ENCODE measurements at regions of chr18 and their contacts with region 1.

Region 1: DNA sequence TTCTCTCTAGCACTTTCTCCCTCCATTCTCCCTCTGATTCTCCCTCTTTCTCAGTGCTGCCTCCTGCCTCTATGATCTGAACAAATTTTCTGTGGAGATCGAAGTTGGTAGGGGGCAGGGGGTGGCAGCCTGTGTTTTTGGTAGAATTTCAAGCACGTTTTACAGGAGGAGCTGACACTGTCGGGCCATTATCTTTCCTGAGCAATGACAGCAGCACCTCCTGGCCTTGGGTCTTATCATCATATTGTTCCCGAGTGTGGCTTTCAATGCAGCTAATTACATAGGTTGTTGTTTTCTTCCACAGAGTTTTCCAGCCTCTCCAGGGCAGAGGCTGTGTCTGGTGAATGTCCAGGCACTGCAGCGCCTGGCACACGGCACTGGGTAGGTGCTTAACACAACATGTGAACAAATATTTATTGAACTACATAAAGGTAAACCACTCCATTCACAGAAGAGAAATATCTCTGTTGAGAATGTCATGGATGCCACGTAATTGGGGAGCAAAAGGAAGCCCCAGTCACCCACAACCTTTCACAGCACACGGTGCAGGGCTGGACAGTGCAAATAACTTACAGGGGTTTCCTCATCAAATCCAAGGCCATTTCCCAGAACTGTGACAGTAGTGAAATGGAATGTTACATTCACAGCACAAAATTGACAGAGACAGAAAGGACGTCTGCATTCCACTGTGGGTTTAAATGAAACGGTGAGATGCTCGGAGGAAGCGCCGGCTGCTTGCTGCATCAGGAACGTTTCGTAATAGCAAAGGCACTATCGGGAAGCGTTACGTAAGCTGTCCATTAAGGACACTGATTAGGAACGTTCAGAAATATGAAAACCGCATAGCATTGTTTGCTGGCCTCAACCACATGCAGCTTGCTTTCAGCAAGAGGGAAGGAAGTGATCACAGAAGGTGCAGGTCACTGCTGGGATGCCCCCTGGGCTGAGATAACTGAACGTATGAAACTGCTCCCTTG is 6.5 kb upstream of the KCNG2 start:
- DNase-seq: no peak
- H3K4me3 Mint-ChIP-seq: no peak overlapping the region
- H3K27ac Mint-ChIP-seq: no peak overlapping the region
- H3K4me1 Mint-ChIP-seq: peaks cover 13% of the 10 kb centered on the region
- H3K27me3 Mint-ChIP-seq: peaks cover 51% of the 10 kb centered on the region

Region 2: GRCh38 chr18:79769698-79770500 is 21.4 kb before region 1 on chr18:
- intact Hi-C with region 1: no loop called
- DNase-seq: no peak
- H3K4me3 Mint-ChIP-seq: no peak overlapping the region
- H3K27ac Mint-ChIP-seq: no peak overlapping the region
- H3K4me1 Mint-ChIP-seq: no peaks in the 10 kb centered on the region
- H3K27me3 Mint-ChIP-seq: peaks cover 5% of the 10 kb centered on the region

Region 3: GRCh38 chr18:79944126-79944741 is 152.9 kb after region 1 on chr18:
- intact Hi-C with region 1: loop called (anchors 10 kb)
- DNase-seq: no peak
- H3K4me3 Mint-ChIP-seq: peak overlapping the region; percentile 2
- H3K27ac Mint-ChIP-seq: peak overlapping the region; percentile 63
- H3K4me1 Mint-ChIP-seq: peaks cover 25% of the 10 kb centered on the region
- H3K27me3 Mint-ChIP-seq: no peaks in the 10 kb centered on the region

Measured in activated T-helper 1 cell treated with anti-CD3 and anti-CD28 coated beads, Interleukin-12 subunit alpha, Interleukin-12 subunit beta, Interleukin-2, Interleukin-4 antibody, amounts not matched to agents 30 ng/mL and 10 ng/mL and 1 ng/mL, durations not matched to agents 14 hours and 24 hours and 36 hours (primary cell).